Activated naive CD4-positive, alpha-beta T cell treated with anti-CD3 and anti-CD28 coated beads for 36 hours (primary cell): ENCODE measurements at regions of chr7 and their contacts with region 1.

Region 1: GRCh38 chr7:152709287-152710152 is 33.6 kb upstream of the XRCC2 start:
- DNase-seq: no peak
- H3K4me3 Mint-ChIP-seq: no peak overlapping the region
- H3K27ac Mint-ChIP-seq: no peak overlapping the region
- H3K4me1 Mint-ChIP-seq: no peaks in the 10 kb centered on the region
- H3K27me3 Mint-ChIP-seq: no peaks in the 10 kb centered on the region

Region 2: DNA sequence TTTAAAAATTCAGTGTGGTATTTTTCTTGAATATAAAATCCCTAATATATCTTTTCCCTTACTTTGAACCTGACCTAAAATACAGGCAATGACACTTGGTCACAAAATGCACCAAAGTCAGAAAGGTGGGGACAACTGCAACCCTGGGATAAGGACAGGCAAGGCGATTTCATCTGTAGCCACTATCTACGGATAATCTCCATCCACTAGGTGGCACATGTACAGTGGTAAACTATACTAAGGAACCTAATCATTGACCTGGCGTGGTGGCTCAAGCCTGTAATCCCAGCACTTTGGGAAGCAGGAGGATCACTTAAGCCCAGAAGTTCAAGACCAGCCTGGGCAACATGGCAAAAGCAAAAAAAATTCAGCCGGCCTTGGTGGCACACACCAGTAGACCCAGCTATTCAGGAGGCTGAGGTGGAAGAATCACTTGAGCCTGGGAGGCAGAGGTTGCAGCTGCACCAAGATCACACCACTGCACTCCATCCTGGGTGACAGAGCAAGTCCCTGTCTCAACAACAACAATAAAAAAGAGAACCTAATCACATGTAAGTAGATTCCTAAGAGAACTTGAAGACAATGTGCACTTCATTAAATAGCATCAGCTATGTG is 372.7 kb before region 1 on chr7:
- CTCF ChIA-PET with region 1: interaction called, 4 read pairs
- intact Hi-C with region 1: loop called (anchors 2 kb)
- DNase-seq: peak; percentile 11
- H3K4me3 Mint-ChIP-seq: no peak overlapping the region
- H3K27ac Mint-ChIP-seq: no peak overlapping the region
- H3K4me1 Mint-ChIP-seq: peaks cover 49% of the 10 kb centered on the region
- H3K27me3 Mint-ChIP-seq: no peaks in the 10 kb centered on the region

Region 3: GRCh38 chr7:152512706-152513105 is 196.8 kb before region 1 on chr7:
- CTCF ChIA-PET with region 1: no interaction called
- intact Hi-C with region 1: no loop called
- DNase-seq: peak; percentile 54
- H3K4me3 Mint-ChIP-seq: peak overlapping the region; percentile 38
- H3K27ac Mint-ChIP-seq: no peak overlapping the region
- H3K4me1 Mint-ChIP-seq: peaks cover 8% of the 10 kb centered on the region
- H3K27me3 Mint-ChIP-seq: no peaks in the 10 kb centered on the region